ENCODE measurements at regions of chr10 and their contacts with region 1.

Region 1: GRCh38 chr10:125629763-125630376 is 53.1 kb downstream of the TEX36 start:
- DNase-seq: peak; percentile 66
- ATAC-seq: peak; percentile 90
- H3K4me3 ChIP-seq: no peak overlapping the region
- H3K27ac ChIP-seq: no peak overlapping the region
- H3K4me1 ChIP-seq: peaks cover 10 to 11% of the 10 kb centered on the region in 2 experiments; a peak in 3 of 4 replicates
- H3K27me3 ChIP-seq: peaks cover 44% of the 10 kb centered on the region; the same call in 1 of the 2 replicates
- CTCF ChIP-seq: peak; percentile 78 to 79 (median 79)
- POLR2A ChIP-seq: no peak
- RAD21 ChIP-seq: peak; percentile 90

Region 2: GRCh38 chr10:124992462-124993344 is 637.2 kb before region 1 on chr10:
- CTCF ChIA-PET with region 1: interaction called, 5 read pairs
- POLR2A ChIA-PET with region 1: no interaction called
- RAD21 ChIA-PET with region 1: interaction called in 1 of 2 experiments, 3 read pairs
- intact Hi-C with region 1: loop called (anchors 5 kb)
- DNase-seq: peak; percentile 43
- ATAC-seq: peak; percentile 86
- H3K4me3 ChIP-seq: no peak overlapping the region
- H3K27ac ChIP-seq: no peak overlapping the region
- H3K4me1 ChIP-seq: no peaks in the 10 kb centered on the region
- H3K27me3 ChIP-seq: no peaks in the 10 kb centered on the region
- CTCF ChIP-seq: peak; percentile 49 to 68 (median 66); a peak in 5 of 6 replicates
- POLR2A ChIP-seq: no peak
- RAD21 ChIP-seq: peak; percentile 78

Region 3: DNA sequence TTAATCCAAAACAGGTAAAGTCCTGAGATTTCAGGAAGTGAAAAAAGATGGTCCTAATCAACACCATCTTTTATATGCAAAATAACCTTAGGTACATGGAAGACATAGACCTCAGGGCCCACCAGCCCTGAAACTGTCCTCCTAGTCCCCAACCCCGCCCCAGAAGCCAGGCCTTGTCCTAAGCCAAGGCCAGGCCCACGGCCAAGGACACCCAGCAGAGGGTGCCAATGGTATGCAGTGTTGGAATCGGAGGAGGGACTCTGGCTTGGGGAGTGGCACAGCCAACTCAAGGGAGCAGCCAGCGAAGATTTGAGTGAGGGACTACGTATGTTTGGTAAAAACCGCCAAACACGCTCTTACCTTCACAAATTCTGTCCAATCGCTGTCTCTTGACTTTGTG is 591.2 kb before region 1 on chr10:
- CTCF ChIA-PET with region 1: no interaction called
- POLR2A ChIA-PET with region 1: no interaction called
- RAD21 ChIA-PET with region 1: no interaction called
- intact Hi-C with region 1: loop called (anchors 2 kb)
- DNase-seq: peak; percentile 74
- ATAC-seq: peak; percentile 92
- H3K4me3 ChIP-seq: 0 out of 4 replicates have a peak overlapping the region, but pooled peaks of 1 of the 2 experiments have one; percentile 3
- H3K27ac ChIP-seq: peak overlapping the region; percentile 15
- H3K4me1 ChIP-seq: peaks cover 62 to 83% of the 10 kb centered on the region in 2 experiments
- H3K27me3 ChIP-seq: no peaks in the 10 kb centered on the region
- CTCF ChIP-seq: peak in 2 of 3 experiments; percentile 71 to 75; a peak in 4 of 6 replicates
- POLR2A ChIP-seq: no peak
- RAD21 ChIP-seq: no peak

Region 4: GRCh38 chr10:125160856-125161706 is 468.8 kb before region 1 on chr10:
- CTCF ChIA-PET with region 1: no interaction called
- POLR2A ChIA-PET with region 1: no interaction called
- RAD21 ChIA-PET with region 1: no interaction called
- intact Hi-C with region 1: loop called (anchors 5 kb)
- DNase-seq: peak; percentile 82
- ATAC-seq: peak; percentile 79
- H3K4me3 ChIP-seq: peak overlapping the region; percentile 64 to 77
- H3K27ac ChIP-seq: peak overlapping the region; percentile 99
- H3K4me1 ChIP-seq: peaks cover 29 to 42% of the 10 kb centered on the region in 2 experiments
- H3K27me3 ChIP-seq: no peaks in the 10 kb centered on the region
- CTCF ChIP-seq: peak in 2 of 3 experiments; percentile 44 to 47; a peak in 4 of 6 replicates
- POLR2A ChIP-seq: peak; percentile 36
- RAD21 ChIP-seq: no peak

Region 5: DNA sequence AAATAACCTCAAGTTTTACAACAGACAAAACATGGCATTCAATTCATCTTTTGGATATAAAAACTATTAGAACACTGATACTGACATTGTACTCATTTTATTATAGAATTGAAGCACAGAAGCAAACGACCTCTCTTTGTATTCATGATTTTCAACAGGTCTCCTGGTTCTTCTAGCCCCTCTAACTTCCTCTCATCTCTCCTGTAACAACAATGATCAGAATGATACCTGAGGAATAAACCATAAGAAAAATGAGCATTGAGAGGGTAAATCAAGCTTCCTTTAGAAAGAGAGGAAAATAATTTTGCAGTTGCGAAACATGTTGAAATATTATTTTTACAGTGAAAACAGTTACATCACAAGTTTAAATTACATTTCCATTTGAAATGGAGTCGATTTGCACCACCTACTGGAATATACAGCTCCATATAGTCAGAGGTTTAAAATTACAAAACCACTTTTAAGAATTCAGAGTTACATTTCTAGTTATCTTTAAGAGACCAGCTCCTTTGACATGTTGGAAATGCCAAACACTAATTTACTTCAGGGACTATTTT is 70.6 kb after region 1 on chr10:
- CTCF ChIA-PET with region 1: no interaction called
- POLR2A ChIA-PET with region 1: no interaction called
- RAD21 ChIA-PET with region 1: no interaction called
- intact Hi-C with region 1: no loop called
- DNase-seq: no peak
- ATAC-seq: no peak
- H3K4me3 ChIP-seq: no peak overlapping the region
- H3K27ac ChIP-seq: no peak overlapping the region
- H3K4me1 ChIP-seq: no peaks in the 10 kb centered on the region
- H3K27me3 ChIP-seq: 0 out of 2 replicates have a peak, but pooled peaks cover 1% of the 10 kb centered on the region
- CTCF ChIP-seq: peak; percentile 10 to 65 (median 49); a peak in 3 of 6 replicates
- POLR2A ChIP-seq: no peak
- RAD21 ChIP-seq: peak; percentile 77